Transverse colon (tissue), 4 donors: ENCODE measurements at regions of chr2 and their contacts with region 1.

Region 1: DNA sequence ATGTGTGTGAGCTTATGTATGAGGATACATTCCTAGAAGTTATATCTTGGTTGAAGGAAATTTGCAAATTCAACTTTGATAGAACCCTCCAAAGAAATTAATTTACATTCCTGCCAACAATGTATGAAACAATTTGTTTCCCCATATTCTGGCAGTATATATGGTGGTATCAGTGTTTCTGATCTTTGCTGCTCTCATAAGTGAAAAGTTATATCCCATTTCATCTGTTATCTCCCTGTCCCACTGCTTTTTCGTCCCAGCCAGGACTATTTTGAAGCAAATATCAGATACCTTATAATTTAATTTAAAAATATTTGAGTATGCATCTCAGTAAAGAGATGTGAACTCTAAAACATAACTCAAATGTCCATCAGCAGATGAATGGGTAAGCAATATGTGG is 7.1 kb downstream of the UBR3 start:
- DNase-seq: no peak
- H3K4me3 ChIP-seq: no peak overlapping the region
- H3K27ac ChIP-seq: no peak overlapping the region
- H3K4me1 ChIP-seq: peaks cover 2 to 37% (median 14%) of the 10 kb centered on the region in 4 donors
- H3K27me3 ChIP-seq: no peaks in the 10 kb centered on the region
- CTCF ChIP-seq: no peak
- EP300 ChIP-seq: no peak
- POLR2A ChIP-seq: no peak

Region 2: GRCh38 chr2:169862816-169863215 is 28.4 kb after region 1 on chr2:
- in situ Hi-C with region 1: no loop called
- intact Hi-C with region 1: loop called (anchors 1 kb)
- DNase-seq: no peak
- H3K4me3 ChIP-seq: no peak overlapping the region
- H3K27ac ChIP-seq: no peak overlapping the region
- H3K4me1 ChIP-seq: no peaks in the 10 kb centered on the region
- H3K27me3 ChIP-seq: no peaks in the 10 kb centered on the region
- CTCF ChIP-seq: no peak
- EP300 ChIP-seq: no peak
- POLR2A ChIP-seq: no peak

Region 3: GRCh38 chr2:169877398-169877797 is 43.0 kb after region 1 on chr2:
- in situ Hi-C with region 1: no loop called
- intact Hi-C with region 1: no loop called
- DNase-seq: no peak
- H3K4me3 ChIP-seq: no peak overlapping the region
- H3K27ac ChIP-seq: no peak overlapping the region
- H3K4me1 ChIP-seq: no peaks in the 10 kb centered on the region
- H3K27me3 ChIP-seq: no peaks in the 10 kb centered on the region
- CTCF ChIP-seq: peak in 2 of 5 experiments; percentile 13 to 19
- EP300 ChIP-seq: no peak
- POLR2A ChIP-seq: no peak

Region 4: DNA sequence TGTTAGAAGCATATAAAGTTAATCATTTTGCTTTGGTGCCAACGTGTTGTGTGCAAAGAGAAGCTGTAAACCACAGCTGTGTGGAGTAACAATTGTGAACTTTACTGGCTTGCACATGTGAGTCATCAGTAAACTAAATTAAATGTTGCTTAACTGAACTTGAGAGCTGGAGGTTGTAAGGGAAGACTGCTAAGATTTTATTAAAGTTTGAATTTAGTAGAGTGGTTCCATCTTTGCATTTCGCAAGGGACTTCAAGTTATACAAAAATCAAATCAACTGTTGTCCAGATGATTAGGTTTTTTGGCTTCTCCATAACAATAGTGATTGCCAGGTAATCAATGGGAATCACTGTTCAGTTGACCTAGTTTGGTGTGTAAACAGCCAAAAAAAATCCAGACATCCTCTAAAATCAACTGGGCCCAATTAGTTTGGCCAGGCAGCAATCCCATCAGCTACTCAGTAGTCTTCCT is 590.9 kb after region 1 on chr2:
- in situ Hi-C with region 1: no loop called
- intact Hi-C with region 1: no loop called
- DNase-seq: no peak
- H3K4me3 ChIP-seq: no peak overlapping the region
- H3K27ac ChIP-seq: peak overlapping the region in 3 of 4 donors; percentile 36 to 55 (median 37)
- H3K4me1 ChIP-seq: peaks cover 0 to 44% (median 6%) of the 10 kb centered on the region in 4 donors
- H3K27me3 ChIP-seq: no peaks in the 10 kb centered on the region
- CTCF ChIP-seq: no peak
- EP300 ChIP-seq: no peak
- POLR2A ChIP-seq: no peak